ENCODE measurements at regions of chr12 and their contacts with region 1.

Region 1: DNA sequence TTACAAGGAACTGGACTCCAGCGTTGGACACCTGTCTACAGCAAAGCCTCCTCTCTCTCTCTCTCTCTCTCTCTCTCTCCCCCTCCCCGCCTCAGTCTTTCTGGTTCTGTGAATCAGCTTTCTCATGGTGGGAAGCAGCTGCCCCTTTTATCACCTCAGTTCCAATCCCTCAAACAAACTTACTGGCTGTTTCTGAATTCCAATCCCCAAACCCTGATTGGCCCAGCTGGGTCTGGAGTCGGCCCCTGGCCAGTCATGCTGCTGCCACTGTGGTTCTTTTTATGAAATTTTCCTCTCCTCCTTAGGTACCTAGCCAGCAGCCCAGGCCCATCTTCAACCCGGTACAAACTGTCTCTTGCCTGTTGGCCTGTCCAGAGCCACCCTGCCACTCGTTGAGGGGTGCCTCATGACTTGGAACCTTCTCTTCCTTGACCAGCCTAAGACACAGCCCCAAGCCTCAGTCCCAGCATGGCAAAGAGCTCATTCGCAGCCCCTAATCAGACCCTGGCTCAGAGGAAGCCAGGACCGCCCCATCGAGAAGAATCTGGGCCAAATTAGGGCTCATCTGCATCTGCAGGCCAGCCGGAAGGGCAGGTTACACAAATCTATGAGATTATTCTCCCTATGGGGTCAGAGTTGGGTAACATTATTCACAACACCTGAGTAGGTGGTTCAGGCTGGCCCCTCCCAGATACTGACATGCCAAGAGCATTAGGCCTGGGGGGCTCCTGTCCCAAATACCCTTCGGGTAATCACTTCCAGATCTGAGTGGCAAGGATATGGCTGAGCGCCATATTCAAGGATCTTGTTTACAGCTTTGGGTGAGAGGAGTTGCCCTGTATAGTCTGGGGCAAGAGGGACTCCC is 9.5 kb upstream of the MORN3 start:
- DNase-seq: no peak
- H3K4me3 ChIP-seq: no peak overlapping the region
- H3K4me3 Mint-ChIP-seq: no peak overlapping the region
- H3K27ac Mint-ChIP-seq: peak overlapping the region; percentile 73
- H3K4me1 ChIP-seq: peaks cover 6% of the 10 kb centered on the region; the same call in 1 of the 2 replicates
- H3K4me1 Mint-ChIP-seq: peaks cover 9% of the 10 kb centered on the region
- H3K27me3 ChIP-seq: no peaks in the 10 kb centered on the region
- H3K27me3 Mint-ChIP-seq: no peaks in the 10 kb centered on the region
- CTCF ChIP-seq: no peak

Region 2: DNA sequence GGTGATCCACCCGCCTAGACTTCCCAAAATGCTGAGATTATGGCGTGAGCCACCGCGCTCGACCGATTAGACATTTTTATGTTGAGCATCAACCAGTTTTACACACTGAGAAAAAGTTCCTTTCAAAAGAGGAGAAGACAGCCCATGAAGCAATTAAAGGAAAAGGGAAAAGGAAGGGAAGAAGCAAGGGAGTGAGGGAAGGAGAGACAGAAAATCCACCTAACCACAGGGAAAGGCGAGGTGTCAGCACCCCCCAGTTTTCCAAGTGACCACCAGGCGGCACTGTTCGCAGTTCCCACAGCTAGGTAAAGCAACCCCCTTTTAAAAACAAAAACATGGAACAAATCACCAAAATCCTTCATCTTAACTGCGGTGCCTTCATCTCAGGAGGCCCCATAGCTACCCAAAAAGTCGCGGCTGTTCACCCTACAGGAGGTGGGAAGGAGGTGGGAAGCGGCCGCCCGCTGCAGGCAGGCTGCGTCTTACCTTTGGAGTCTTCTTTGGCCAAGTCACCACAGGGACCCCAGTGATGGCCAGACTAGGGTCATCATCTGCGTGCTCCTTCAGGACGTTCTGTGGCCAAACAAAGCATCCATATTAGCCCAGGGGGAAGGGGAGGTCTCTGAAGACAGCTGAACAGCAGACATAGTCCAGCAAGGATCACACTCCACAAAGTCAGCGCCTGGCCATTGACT is 184.7 kb before region 1 on chr12:
- CTCF ChIA-PET with region 1: no interaction called
- POLR2A ChIA-PET with region 1: no interaction called
- intact Hi-C with region 1: loop called (anchors 2 kb)
- DNase-seq: peak in 1 of 2 experiments; percentile 60
- H3K4me3 ChIP-seq: no peak overlapping the region
- H3K4me3 Mint-ChIP-seq: no peak overlapping the region
- H3K27ac Mint-ChIP-seq: no peak overlapping the region
- H3K4me1 ChIP-seq: 0 out of 2 replicates have a peak, but pooled peaks cover 5% of the 10 kb centered on the region
- H3K4me1 Mint-ChIP-seq: peaks cover 8% of the 10 kb centered on the region
- H3K27me3 ChIP-seq: no peaks in the 10 kb centered on the region
- H3K27me3 Mint-ChIP-seq: no peaks in the 10 kb centered on the region
- CTCF ChIP-seq: peak; percentile 75 to 81

Region 3: GRCh38 chr12:121499929-121500793 is 178.8 kb before region 1 on chr12:
- CTCF ChIA-PET with region 1: no interaction called
- POLR2A ChIA-PET with region 1: no interaction called
- intact Hi-C with region 1: loop called (anchors 1 kb)
- DNase-seq: peak; percentile 61 to 80
- H3K4me3 ChIP-seq: no peak overlapping the region
- H3K4me3 Mint-ChIP-seq: no peak overlapping the region
- H3K27ac Mint-ChIP-seq: no peak overlapping the region
- H3K4me1 ChIP-seq: no peaks in the 10 kb centered on the region
- H3K4me1 Mint-ChIP-seq: no peaks in the 10 kb centered on the region
- H3K27me3 ChIP-seq: no peaks in the 10 kb centered on the region
- H3K27me3 Mint-ChIP-seq: no peaks in the 10 kb centered on the region
- CTCF ChIP-seq: peak; percentile 97

Region 4: DNA sequence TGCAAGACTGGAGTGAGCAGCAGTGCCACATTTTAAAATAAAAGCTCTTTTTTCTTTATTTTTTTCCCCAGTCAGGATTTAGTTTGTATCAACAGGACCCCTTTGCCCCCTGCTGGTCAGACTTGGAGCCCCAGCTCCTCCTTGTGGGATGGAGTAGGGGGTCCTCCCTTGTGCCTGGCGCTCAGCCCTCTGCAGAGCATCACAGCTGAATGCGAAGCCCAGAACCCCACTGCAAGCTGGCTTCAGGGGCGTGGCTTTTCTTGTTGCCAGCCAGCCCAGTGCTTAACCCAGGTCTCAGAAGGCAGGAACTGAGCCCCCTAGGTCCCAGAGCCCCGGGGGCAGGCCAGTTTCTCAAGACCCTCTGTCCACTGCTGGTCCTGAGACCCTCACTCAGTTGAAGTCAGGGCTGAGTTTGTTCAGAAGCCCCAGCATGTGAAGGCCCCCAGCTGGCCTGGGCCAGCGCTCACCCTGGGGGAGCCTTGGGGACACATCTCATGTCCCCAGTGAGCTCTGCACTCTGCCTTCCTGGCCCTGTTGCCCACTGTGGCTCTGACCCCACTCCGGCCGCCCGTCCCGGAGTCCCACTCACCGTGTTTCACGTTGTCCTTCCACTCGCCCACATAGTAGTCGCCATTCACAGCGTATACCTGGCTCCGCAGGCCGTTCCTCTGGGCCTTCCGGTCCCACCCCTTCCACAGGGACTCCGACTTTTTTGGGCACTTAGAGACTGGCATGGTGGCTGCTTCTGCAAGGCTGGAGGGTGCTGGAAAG is 10.0 kb before region 1 on chr12:
- CTCF ChIA-PET with region 1: no interaction called
- POLR2A ChIA-PET with region 1: no interaction called
- intact Hi-C with region 1: loop called (anchors 1 kb)
- DNase-seq: peak; percentile 72
- H3K4me3 ChIP-seq: peak overlapping the region; percentile 33
- H3K4me3 Mint-ChIP-seq: peak overlapping the region; percentile 86
- H3K27ac Mint-ChIP-seq: peak overlapping the region; percentile 91
- H3K4me1 ChIP-seq: peaks cover 23% of the 10 kb centered on the region
- H3K4me1 Mint-ChIP-seq: peaks cover 17% of the 10 kb centered on the region
- H3K27me3 ChIP-seq: no peaks in the 10 kb centered on the region
- H3K27me3 Mint-ChIP-seq: no peaks in the 10 kb centered on the region
- CTCF ChIP-seq: peak; percentile 61 to 82

Measured in Caco-2 (cell line).